CD4-positive, alpha-beta T cell (primary cell): ENCODE measurements at regions of chr14 and their contacts with region 1.

Region 1: GRCh38 chr14:69611201-69612011 is at the start of gene SUSD6:
- DNase-seq: peak; percentile 78 to 96 (median 86)
- ATAC-seq: peak; percentile 78
- H3K4me3 ChIP-seq: peak within 1 kb of the TSS; percentile 91
- H3K4me3 Mint-ChIP-seq: peak within 1 kb of the TSS; percentile 90
- H3K27ac ChIP-seq: peak within 1 kb of the TSS; percentile 74 to 92
- H3K27ac Mint-ChIP-seq: peak within 1 kb of the TSS; percentile 94
- H3K4me1 ChIP-seq: peaks cover 61% of the 10 kb centered on the region
- H3K4me1 Mint-ChIP-seq: peaks cover 59% of the 10 kb centered on the region
- H3K27me3 ChIP-seq: no peaks in the 10 kb centered on the region
- H3K27me3 Mint-ChIP-seq: no peaks in the 10 kb centered on the region
- CTCF ChIP-seq: no peak
- total RNA-seq, gene SUSD6: 93.7 to 95.1 TPM

Region 2: DNA sequence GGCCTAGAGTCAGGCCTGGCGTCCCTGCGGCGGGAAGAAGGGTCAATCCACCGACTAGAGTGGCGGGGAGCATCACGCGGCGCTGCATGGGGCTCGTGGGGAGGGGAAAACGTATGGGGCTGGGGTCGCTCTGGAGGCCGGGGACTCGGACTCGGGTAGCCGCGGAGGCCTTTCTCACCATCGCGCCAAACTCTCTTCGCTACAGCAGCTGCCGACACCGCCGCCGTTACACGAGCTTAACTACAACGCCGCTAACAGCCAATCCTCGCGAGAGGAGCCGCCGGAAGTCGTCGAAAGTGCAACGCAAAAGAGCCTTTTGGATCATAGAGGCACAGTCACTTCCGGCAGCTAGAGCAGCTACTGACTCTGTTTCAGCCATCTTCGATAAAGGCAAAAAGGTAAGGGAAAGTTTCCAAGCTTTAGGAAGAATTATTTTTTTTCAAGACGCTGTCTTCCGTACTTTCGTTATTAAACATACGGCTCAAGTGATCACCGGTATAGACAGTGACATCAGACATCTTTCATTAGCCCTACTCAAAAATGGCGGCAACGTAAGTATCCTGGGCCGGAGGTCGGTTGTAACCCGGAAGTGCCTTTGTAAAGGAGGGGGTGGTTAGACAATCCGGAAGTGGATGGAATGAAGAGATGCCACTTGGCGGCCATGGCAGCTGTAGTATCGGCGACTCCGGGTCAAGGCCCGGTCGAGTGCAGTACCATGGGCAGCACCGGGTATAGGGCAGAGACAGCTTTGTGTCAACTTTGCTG is 213.2 kb before region 1 on chr14 and contains the starts of genes ERH and SLC39A9:
- CTCF ChIA-PET with region 1: no interaction called
- POLR2A ChIA-PET with region 1: interaction called, 3 read pairs
- intact Hi-C with region 1: loop called in 1 of 2 experiments (anchors 10 kb)
- DNase-seq: peak; percentile 90 to 98 (median 93)
- ATAC-seq: peak; percentile 84
- H3K4me3 ChIP-seq: peak within 1 kb of the TSS; percentile 94
- H3K4me3 Mint-ChIP-seq: peak within 1 kb of the TSS; percentile 96
- H3K27ac ChIP-seq: peak within 1 kb of the TSS; percentile 82 to 92
- H3K27ac Mint-ChIP-seq: peak within 1 kb of the TSS; percentile 99
- H3K4me1 ChIP-seq: peaks cover 53% of the 10 kb centered on the region
- H3K4me1 Mint-ChIP-seq: peaks cover 85% of the 10 kb centered on the region
- H3K27me3 ChIP-seq: no peaks in the 10 kb centered on the region
- H3K27me3 Mint-ChIP-seq: no peaks in the 10 kb centered on the region
- CTCF ChIP-seq: no peak
- total RNA-seq, gene ERH: 87.0 to 96.3 TPM
- total RNA-seq, gene SLC39A9: 19.5 to 20.5 TPM

Region 3: DNA sequence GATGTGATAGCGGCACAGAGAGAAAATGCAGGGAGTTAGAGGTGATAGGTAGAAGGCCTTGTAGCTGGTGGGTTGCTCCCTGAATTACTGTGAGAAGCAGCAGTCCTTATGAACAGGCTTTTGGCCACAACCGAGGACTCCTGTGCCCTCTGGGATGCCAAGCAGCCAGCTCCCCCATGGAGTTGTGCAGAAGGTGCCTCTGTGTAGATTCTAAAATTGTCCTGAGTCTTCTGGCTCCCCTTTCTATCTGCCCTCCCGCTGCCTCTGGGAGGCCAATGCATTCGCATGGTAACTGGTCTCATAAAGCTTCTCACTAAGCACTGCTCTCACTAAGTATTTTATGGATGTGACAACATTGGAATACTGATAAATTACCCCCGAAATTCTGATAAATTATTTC is 16.1 kb before region 1 on chr14:
- CTCF ChIA-PET with region 1: no interaction called
- POLR2A ChIA-PET with region 1: no interaction called
- intact Hi-C with region 1: no loop called
- DNase-seq: no peak
- ATAC-seq: no peak
- H3K4me3 ChIP-seq: no peak overlapping the region
- H3K4me3 Mint-ChIP-seq: no peak overlapping the region
- H3K27ac ChIP-seq: no peak overlapping the region
- H3K27ac Mint-ChIP-seq: no peak overlapping the region
- H3K4me1 ChIP-seq: no peaks in the 10 kb centered on the region
- H3K4me1 Mint-ChIP-seq: no peaks in the 10 kb centered on the region
- H3K27me3 ChIP-seq: no peaks in the 10 kb centered on the region
- H3K27me3 Mint-ChIP-seq: no peaks in the 10 kb centered on the region
- CTCF ChIP-seq: no peak

Region 4: DNA sequence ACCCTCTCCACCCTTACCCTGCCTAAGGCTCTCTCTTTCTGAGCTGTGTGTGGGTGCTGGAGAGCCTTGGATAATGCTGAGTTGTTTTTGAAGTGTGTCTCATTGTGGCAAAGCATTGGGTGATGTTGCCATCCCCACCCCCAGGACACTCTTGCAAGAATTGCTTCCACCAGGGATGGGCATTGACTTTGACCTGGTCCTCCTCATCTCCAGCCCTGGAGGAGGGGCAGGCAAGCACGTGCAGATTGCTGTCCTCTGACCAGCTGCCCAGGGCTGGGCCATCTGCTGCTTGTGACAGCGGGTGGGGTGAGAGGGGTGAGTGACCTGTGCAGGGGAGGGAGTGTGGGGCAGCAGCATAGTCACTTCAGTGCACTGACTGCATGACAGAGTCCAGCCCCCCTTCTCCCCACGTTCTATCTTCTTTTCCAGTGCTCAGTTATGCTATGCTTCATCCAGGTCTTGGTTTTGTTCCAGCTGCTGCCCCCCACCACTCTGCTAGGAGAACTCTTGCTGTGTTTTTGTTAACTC is 26.2 kb after region 1 on chr14:
- CTCF ChIA-PET with region 1: interaction called, 3 read pairs
- POLR2A ChIA-PET with region 1: interaction called, 44 read pairs
- intact Hi-C with region 1: no loop called
- DNase-seq: no peak
- ATAC-seq: no peak
- H3K4me3 ChIP-seq: no peak overlapping the region
- H3K4me3 Mint-ChIP-seq: peak overlapping the region; percentile 77
- H3K27ac ChIP-seq: peak overlapping the region in 1 of 2 donors; percentile 76
- H3K27ac Mint-ChIP-seq: peak overlapping the region; percentile 85
- H3K4me1 ChIP-seq: peaks cover 63% of the 10 kb centered on the region
- H3K4me1 Mint-ChIP-seq: peaks cover 86% of the 10 kb centered on the region
- H3K27me3 ChIP-seq: no peaks in the 10 kb centered on the region
- H3K27me3 Mint-ChIP-seq: no peaks in the 10 kb centered on the region
- CTCF ChIP-seq: no peak

Region 5: DNA sequence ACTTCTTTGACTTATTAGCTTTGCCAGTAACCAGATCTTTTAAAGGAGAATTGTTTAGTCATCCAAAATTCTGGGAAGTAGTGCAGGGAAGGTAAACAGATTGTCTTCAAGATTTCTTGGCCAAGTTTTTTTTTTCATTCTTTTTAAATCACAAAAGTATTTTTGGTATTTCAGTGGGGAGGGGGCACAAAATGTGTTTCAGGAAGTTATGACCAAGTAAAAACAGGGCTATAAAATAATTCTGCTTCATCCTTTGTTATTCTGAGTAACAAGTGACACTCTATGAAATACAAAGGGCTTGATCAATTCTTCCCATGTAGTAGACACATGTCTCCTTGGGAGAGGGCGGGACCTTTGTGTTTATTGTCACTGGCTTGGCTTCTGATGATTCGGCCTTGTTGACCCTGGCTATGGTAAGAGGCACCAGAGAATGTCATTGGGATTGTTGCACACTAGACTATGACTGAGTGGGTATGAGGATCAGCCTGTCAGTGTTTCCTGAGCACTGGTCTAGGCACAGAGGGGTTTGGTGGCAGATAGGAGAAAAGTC is 55.4 kb after region 1 on chr14:
- CTCF ChIA-PET with region 1: interaction called, 3 read pairs
- POLR2A ChIA-PET with region 1: interaction called, 5 read pairs
- intact Hi-C with region 1: loop called in 1 of 2 experiments (anchors 10 kb)
- DNase-seq: no peak
- ATAC-seq: no peak
- H3K4me3 ChIP-seq: no peak overlapping the region
- H3K4me3 Mint-ChIP-seq: peak overlapping the region; percentile 23
- H3K27ac ChIP-seq: no peak overlapping the region
- H3K27ac Mint-ChIP-seq: peak overlapping the region; percentile 84
- H3K4me1 ChIP-seq: peaks cover 51% of the 10 kb centered on the region
- H3K4me1 Mint-ChIP-seq: peaks cover 96% of the 10 kb centered on the region
- H3K27me3 ChIP-seq: no peaks in the 10 kb centered on the region
- H3K27me3 Mint-ChIP-seq: no peaks in the 10 kb centered on the region
- CTCF ChIP-seq: no peak

Region 6: DNA sequence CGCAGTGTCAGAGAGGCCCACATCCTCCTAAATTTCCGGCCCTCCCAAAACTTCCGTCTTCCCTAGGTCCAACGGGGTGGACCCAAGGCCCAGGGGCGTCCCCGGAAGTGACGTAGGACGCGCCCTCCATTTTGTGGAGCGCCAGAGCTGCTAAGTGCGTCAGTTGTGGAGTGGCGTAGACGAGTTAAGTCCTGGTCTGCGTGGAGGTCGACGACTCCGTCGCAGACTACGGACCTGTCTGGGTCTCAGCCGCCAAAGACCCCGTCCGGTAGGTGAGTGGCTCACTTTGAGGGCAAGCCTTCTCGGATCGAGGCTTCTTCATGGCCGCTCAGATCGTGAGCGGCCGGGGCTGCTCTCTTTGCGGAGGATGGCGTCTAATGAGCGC is 155.6 kb after region 1 on chr14 and contains the start of gene SRSF5:
- CTCF ChIA-PET with region 1: no interaction called
- POLR2A ChIA-PET with region 1: interaction called, 70 read pairs
- intact Hi-C with region 1: loop called (anchors 1 to 5 kb)
- DNase-seq: peak; percentile 89 to 97 (median 92)
- ATAC-seq: peak; percentile 78
- H3K4me3 ChIP-seq: peak within 1 kb of the TSS; percentile 97
- H3K4me3 Mint-ChIP-seq: peak within 1 kb of the TSS; percentile 100
- H3K27ac ChIP-seq: peak within 1 kb of the TSS; percentile 100
- H3K27ac Mint-ChIP-seq: peak within 1 kb of the TSS; percentile 100
- H3K4me1 ChIP-seq: peaks cover 53% of the 10 kb centered on the region
- H3K4me1 Mint-ChIP-seq: peaks cover 83% of the 10 kb centered on the region
- H3K27me3 ChIP-seq: no peaks in the 10 kb centered on the region
- H3K27me3 Mint-ChIP-seq: no peaks in the 10 kb centered on the region
- CTCF ChIP-seq: no peak
- total RNA-seq, gene SRSF5: 1,437 to 1,479 TPM